ENCODE measurements at regions of chr3 and their contacts with region 1.

Region 1: GRCh38 chr3:7927015-7927414 is 574.6 kb upstream of the LMCD1 start:
- DNase-seq: no peak
- H3K4me3 ChIP-seq: no peak overlapping the region
- H3K27ac ChIP-seq: no peak overlapping the region
- H3K4me1 ChIP-seq: no peaks in the 10 kb centered on the region
- H3K27me3 ChIP-seq: no peaks in the 10 kb centered on the region
- CTCF ChIP-seq: no peak

Region 2: DNA sequence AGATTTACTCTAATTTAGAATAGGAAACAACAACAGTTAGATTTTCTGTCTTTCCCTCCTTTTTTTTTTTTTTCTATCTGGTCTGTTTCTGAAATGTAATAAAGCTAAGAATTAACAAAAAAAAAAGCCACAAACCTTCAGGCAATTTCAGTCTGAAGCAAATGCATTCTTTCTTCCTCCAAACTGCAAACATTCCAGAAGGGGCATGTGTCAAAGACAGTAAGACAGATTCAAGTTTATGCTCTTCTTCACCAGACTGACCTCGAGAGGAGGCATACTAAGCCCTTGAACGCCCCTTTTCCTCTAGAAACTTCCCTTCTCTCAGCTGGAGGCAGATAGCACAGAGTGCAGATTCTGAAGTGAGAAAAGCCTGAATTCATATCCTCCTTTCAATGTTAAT is 80.0 kb before region 1 on chr3:
- CTCF ChIA-PET with region 1: interaction called, 11 read pairs
- POLR2A ChIA-PET with region 1: no interaction called
- intact Hi-C with region 1: no loop called
- DNase-seq: no peak
- H3K4me3 ChIP-seq: no peak overlapping the region
- H3K27ac ChIP-seq: no peak overlapping the region
- H3K4me1 ChIP-seq: no peaks in the 10 kb centered on the region
- H3K27me3 ChIP-seq: no peaks in the 10 kb centered on the region
- CTCF ChIP-seq: no peak

Region 3: DNA sequence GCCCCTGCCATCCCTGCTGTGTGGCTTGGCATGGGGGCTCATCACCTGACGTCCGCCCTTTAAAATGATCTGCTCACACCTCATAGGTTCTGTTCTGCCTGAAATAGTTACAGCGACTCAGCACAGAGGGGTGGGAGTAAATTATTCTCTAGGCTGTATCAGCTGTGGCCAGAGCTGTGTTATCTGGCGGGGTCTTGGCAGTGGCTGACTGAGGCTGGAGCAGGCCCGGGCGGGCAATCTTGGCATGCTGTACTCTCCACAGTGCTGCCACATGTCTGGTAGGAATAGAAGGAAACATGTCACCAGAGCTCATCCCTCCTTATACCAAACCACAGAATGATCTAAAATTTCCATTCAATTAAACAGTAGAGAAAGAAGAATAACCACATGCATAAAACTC is 74.7 kb after region 1 on chr3:
- CTCF ChIA-PET with region 1: no interaction called
- POLR2A ChIA-PET with region 1: no interaction called
- intact Hi-C with region 1: no loop called
- DNase-seq: no peak
- H3K4me3 ChIP-seq: no peak overlapping the region
- H3K27ac ChIP-seq: no peak overlapping the region
- H3K4me1 ChIP-seq: no peaks in the 10 kb centered on the region
- H3K27me3 ChIP-seq: peaks cover 26% of the 10 kb centered on the region
- CTCF ChIP-seq: no peak